Activated CD8-positive, alpha-beta memory T cell treated with anti-CD3 and anti-CD28 coated beads, Interleukin-2, amount 10 ng/mL, durations not matched to agents 7 days and 5 days (primary cell): ENCODE measurements at regions of chr6 and their contacts with region 1.

Region 1: GRCh38 chr6:43769526-43770416 is at the start of gene VEGFA:
- DNase-seq: peak; percentile 92
- ATAC-seq: peak; percentile 70
- H3K4me3 Mint-ChIP-seq: peak within 1 kb of the TSS; percentile 94
- H3K27ac Mint-ChIP-seq: peak within 1 kb of the TSS; percentile 84
- H3K4me1 Mint-ChIP-seq: peaks cover 30% of the 10 kb centered on the region
- H3K27me3 Mint-ChIP-seq: peaks cover 6% of the 10 kb centered on the region
- total RNA-seq, gene VEGFA: 27.8 to 29.0 TPM

Region 2: DNA sequence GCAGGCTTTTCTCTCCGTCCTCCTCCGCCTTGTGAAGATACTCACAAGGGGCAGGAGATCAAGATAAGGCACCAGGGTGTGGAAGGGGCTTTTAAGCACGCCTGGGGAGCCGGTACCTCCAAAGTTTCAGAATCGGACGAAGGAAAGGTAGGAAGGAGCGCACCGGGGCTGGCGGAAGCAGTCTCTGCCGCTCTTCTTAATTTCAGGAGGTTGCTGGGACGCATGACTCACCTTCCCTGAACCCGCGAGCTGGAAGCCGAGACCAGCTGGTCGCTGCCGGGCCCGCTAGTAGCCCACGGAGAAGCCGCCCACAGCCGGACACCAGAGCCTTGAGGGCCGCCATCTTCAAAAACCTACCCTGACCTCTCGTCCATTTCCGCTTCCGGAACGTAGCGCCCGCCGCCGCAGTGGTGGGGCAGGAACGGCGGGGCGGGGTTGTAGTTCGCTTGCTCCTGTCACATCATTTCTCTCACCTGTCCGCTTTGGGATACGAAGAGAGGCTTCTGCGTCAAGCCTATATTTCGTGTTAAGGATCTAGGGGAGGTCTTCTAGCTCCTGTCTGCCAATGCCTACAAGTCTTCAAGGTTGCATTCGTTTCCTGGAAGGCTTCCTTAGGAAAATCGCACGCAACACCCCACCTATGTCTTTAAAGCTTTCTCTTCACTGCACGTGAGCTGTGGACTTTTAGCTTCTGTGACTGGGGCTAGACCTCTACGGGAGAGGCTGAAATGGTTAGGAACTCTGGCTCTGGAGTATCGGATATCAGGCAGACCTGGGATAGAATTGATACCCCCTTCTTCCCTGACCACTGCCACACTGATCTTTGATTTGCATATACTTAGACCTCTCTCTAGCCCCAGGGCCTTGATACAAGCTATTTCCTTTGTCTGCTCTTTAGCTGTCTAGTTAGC is 82.1 kb before region 1 on chr6 and contains the start of gene MRPS18A:
- CTCF ChIA-PET with region 1: interaction called, 10 read pairs
- DNase-seq: peak; percentile 90
- ATAC-seq: peak; percentile 98
- H3K4me3 Mint-ChIP-seq: peak within 1 kb of the TSS; percentile 89
- H3K27ac Mint-ChIP-seq: peak within 1 kb of the TSS; percentile 92
- H3K4me1 Mint-ChIP-seq: peaks cover 36% of the 10 kb centered on the region
- H3K27me3 Mint-ChIP-seq: no peaks in the 10 kb centered on the region
- total RNA-seq, gene MRPS18A: 41.0 to 47.4 TPM

Region 3: GRCh38 chr6:43723737-43724295 is 46.0 kb before region 1 on chr6:
- CTCF ChIA-PET with region 1: interaction called, 67 read pairs
- DNase-seq: peak; percentile 82
- ATAC-seq: peak; percentile 80
- H3K4me3 Mint-ChIP-seq: no peak overlapping the region
- H3K27ac Mint-ChIP-seq: no peak overlapping the region
- H3K4me1 Mint-ChIP-seq: peaks cover 29% of the 10 kb centered on the region
- H3K27me3 Mint-ChIP-seq: peaks cover 23% of the 10 kb centered on the region

Region 4: GRCh38 chr6:43758617-43759050 is 11.1 kb before region 1 on chr6:
- CTCF ChIA-PET with region 1: interaction called, 31 read pairs
- DNase-seq: no peak
- ATAC-seq: peak; percentile 59
- H3K4me3 Mint-ChIP-seq: no peak overlapping the region
- H3K27ac Mint-ChIP-seq: no peak overlapping the region
- H3K4me1 Mint-ChIP-seq: peaks cover 6% of the 10 kb centered on the region
- H3K27me3 Mint-ChIP-seq: peaks cover 9% of the 10 kb centered on the region

Region 5: GRCh38 chr6:44064089-44064947 is 294.5 kb after region 1 on chr6:
- CTCF ChIA-PET with region 1: interaction called, 17 read pairs
- DNase-seq: peak; percentile 56
- ATAC-seq: peak; percentile 56
- H3K4me3 Mint-ChIP-seq: no peak overlapping the region
- H3K27ac Mint-ChIP-seq: no peak overlapping the region
- H3K4me1 Mint-ChIP-seq: peaks cover 9% of the 10 kb centered on the region
- H3K27me3 Mint-ChIP-seq: no peaks in the 10 kb centered on the region